Astrocyte of the cerebellum (primary cell): ENCODE measurements at regions of chr10 and their contacts with region 1.

Region 1: DNA sequence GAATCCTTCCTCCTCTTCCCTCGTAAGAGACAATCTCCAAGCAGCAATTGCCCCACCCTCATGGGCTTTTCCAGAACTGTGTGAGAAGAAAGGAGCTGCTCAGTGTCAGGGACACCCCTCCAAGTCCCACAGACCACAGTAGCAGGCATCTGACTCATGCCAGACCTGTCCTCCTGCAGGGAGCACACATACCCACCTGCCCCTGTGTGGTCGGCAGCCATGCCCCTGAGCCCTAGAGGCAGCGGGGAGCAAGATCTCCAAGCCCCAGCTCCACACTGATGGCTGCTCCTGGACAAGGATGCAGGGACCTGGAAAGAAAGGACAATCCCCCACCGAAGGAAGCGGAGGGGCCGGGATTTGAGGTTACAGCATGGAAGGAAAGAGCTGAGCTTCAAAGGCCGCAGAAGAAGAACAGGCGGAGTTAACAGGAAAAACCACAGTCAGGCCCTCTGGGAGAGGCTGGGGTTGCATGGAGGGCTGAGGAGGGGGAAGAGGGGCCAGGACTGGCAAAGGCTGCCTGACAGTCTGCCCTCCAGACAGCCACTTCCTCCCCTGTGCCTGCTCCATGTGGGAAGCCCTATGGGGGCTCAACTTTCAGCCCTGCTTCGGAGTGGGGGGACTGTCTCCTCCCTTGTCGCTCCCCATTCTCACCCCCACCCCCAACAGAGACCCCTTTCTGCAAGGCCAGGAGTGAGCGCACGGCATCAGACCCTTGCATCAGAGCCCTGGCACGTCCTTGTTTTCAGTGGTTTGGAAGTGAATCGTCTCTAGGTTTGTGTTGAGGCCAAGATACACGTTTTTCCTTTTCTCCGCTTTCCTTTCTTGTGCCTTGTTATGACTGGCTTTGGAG is 46.8 kb downstream of the ASB13 start:
- DNase-seq: peak; percentile 63
- H3K4me3 ChIP-seq: no peak overlapping the region
- CTCF ChIP-seq: no peak

Region 2: GRCh38 chr10:5446390-5446926 is 173.1 kb before region 1 on chr10:
- in situ Hi-C with region 1: loop called (anchors 5 kb)
- DNase-seq: peak; percentile 32
- H3K4me3 ChIP-seq: peak overlapping the region; percentile 59
- CTCF ChIP-seq: no peak

Region 3: DNA sequence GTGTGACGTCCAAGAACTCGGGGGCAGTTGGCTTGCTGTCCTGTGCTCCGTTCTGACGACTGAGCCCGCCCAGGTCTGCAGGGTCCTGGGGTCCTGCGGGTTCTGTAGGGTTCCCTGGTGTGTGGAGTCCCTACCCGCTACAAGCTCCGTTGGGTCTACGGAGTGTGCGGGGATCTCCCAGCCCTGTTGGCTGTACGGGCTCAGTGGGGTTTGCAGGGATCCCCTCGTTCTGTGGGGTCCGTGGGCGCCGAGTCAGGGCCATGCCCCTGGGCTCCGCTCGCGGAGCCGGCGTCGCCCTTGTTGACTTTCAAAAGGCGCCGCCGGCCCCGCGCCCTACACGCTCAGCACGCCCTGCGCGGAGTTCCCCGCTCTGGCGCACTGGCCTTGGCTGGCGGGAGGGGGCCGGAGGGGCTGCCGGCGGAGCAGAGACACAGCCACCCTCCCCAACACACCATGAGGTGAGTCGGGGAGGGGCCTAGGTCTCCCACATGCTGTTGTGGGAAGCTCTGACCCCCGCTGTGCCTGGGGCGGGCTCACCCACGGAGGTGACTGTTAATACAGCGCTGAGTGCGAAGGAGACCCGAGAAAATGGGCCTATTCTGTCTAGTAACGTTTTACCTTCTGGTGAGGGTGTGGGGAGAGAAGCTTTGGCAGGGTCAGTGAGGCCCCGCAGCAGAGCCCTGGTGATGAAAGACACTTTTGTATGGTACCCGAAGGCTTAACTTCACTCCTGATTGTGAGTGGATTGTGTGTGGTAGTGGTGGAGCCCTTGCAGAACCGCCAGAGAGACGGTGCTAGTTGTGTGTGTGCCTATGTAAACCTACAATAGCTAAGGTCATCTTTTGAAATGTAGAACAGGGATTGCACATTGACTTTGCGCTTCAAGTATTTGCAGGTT is 73.1 kb after region 1 on chr10:
- in situ Hi-C with region 1: no loop called
- DNase-seq: no peak
- H3K4me3 ChIP-seq: peak overlapping the region; percentile 59
- CTCF ChIP-seq: no peak